GM10248 (cell line): ENCODE measurements at regions of chr19 and their contacts with region 1.

Region 1: DNA sequence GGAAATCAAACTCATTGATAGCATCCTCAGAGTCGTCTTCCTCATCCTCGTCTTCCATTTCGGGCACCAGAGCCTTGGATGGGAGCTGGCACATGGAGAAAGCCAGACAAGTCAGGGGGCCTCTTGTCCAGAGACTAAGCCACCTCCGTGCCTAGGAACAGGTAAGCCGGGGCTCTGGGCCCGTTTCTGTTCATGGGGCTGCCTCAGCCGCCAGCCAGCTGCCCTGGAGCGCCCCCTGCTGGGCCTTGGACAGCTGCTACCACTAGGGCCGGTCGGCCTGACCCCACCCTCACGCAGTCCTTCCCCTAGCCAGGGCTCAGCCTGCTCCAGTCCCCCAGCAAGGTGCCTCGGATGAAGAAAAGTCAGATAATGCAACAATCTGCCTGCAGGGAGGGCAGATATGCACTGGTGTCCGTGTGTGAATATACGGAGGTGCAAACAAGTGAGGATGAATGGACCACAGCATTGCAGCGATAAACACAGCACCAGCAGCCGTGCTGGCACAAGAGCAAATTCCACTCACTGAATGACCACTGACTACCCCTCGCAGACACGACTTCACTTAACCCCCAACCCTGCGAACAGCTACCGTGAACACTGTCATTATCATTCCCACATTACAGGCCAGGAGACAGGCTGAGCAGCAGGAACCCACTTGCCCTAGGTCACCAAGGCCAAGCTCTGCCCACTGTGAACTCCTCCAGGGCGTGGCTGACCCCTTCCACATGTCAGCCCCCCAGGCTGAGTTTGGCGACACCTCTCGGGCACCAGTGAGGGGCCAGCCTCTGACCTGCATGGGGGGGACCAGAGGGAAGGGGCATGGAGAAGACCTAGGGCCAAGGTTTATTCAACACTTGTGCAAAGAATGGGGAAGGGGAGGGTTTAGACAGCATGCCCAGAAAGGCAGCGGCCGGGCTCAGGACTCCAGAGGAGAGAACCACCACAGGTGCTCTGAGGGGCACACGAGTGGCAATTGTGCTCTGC is 12.1 kb upstream of the PRKD2 start:
- DNase-seq: peak; percentile 91
- CTCF ChIP-seq: peak; percentile 96

Region 2: GRCh38 chr19:46614114-46614722 is 114.8 kb before region 1 on chr19:
- CTCF ChIA-PET with region 1: interaction called, 22 read pairs
- POLR2A ChIA-PET with region 1: no interaction called
- DNase-seq: peak; percentile 82
- CTCF ChIP-seq: peak; percentile 82

Region 3: GRCh38 chr19:46704379-46705076 is 24.5 kb before region 1 on chr19:
- CTCF ChIA-PET with region 1: interaction called, 66 read pairs
- POLR2A ChIA-PET with region 1: interaction called, 3 read pairs
- DNase-seq: peak; percentile 92
- CTCF ChIP-seq: peak; percentile 90

Region 4: GRCh38 chr19:46710687-46711086 is 18.3 kb before region 1 on chr19:
- CTCF ChIA-PET with region 1: interaction called, 66 read pairs
- POLR2A ChIA-PET with region 1: no interaction called
- DNase-seq: no peak
- CTCF ChIP-seq: no peak

Region 5: DNA sequence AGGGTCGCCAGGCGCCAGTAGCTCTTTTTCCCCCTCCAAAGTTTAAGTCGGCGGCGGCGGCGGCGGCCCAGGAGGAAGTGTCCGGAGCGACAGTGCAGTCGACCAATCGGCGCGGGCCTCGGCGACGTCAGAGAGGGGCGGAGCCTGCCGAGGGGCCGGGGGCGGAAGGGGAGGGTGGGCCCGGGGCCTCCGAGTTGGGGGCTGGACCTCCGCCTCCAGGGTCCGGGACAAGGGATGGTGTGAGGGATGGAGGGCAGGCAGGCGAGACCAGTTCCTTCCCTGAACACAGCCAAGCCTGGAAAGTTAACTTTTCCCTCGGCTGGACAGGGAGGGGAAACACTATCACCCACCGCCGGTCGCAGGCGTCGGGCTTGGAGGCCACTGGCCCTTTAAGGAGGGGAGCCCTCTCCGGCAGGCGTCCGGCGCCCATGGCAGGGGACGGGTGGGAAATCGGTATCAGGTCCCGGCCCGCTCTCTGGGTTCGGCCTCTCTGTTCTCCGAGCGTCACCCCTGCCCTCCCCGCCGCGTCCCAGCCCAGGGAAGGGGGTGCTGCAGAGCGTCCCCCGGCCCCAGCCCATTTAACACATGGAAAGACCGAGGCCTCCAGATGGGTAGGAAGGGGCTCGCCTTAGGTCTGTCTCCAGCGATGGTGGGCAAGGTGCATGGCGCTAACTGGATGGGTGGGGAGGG is 11.8 kb before region 1 on chr19 and contains the start of gene PRKD2:
- CTCF ChIA-PET with region 1: interaction called, 44 read pairs
- POLR2A ChIA-PET with region 1: no interaction called
- DNase-seq: peak; percentile 96
- CTCF ChIP-seq: no peak

Region 6: GRCh38 chr19:46748325-46749109 is 19.5 kb after region 1 on chr19:
- CTCF ChIA-PET with region 1: interaction called, 22 read pairs
- POLR2A ChIA-PET with region 1: no interaction called
- DNase-seq: peak; percentile 64
- CTCF ChIP-seq: peak; percentile 64

Region 7: DNA sequence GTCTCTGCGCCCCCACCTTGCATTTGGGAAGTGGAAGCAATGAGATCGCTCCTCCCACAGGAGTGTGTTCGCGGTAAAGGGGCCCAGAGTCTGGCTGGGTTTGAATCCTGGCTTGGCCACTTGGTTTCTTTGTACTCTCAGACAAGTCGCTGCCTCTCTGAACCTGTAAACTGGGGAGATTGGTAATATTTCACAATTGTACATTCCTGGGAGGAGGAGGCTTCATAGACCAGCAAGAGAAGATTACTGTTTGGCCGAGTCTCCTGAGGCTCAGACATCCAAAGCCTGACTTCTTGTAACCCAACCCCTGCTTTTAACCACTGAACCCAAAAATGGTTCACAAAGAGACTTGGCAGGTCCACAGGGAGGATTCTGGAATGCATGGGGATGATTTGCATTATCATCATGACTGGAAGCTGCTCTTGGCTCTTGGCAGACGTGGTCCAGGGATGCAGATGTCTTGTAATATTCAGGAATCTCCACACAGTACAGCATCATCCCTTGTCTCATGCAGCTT is 30.9 kb after region 1 on chr19:
- CTCF ChIA-PET with region 1: no interaction called
- POLR2A ChIA-PET with region 1: no interaction called
- DNase-seq: no peak
- CTCF ChIP-seq: no peak

Region 8: DNA sequence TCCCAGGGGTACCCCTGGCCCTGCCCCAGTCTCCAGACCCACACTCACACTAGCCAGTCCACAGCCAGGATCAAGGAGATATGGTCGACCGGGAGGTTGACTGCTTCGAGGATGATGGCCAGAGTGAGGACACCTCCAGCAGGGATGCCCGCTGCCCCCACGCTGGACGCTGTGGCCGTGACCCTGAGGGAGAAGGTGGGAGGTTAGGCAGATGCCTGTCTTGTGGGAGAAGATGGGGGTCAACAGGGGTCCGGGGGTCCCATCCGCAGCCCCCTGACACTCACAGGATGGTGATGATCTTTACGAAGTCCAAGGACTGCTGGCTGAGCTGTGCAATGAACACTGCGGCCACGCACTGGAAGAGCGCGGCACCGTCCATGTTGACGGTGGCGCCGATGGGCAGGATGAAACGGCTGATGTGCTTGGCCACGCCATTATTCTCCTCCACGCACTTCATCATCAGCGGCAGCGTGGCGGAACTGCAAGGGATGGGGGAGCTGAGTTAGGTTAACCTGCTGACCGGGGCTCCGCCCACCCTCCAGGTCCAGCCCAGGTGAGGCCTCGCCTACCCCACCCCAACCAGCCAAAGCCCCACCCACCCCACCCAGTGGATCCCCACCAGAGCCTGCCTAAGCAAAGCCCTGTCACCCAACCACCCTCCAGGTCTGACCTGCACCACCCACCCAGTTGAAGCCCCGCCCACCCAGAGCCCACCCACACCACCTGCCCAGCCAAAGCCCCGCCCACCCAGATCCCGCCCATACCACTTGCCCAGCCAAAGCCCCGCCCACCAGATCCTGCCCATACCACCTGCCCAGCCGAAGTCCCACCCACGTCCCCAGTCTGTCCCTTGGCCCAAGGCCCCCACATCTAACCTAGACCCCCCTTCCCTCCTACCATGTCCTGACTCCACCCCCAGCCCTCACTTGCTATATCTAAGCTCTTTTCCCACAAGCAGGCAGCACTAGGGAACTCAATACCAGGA is 48.2 kb after region 1 on chr19:
- CTCF ChIA-PET with region 1: no interaction called
- POLR2A ChIA-PET with region 1: no interaction called
- DNase-seq: peak; percentile 40
- CTCF ChIP-seq: no peak